GM12878 (cell line): ENCODE measurements at regions of chr1 and their contacts with region 1.

Region 1: GRCh38 chr1:56135069-56135863 is 444.1 kb downstream of the PLPP3 start:
- DNase-seq: no peak
- ATAC-seq: peak; percentile 67
- H3K4me3 ChIP-seq: no peak overlapping the region
- H3K27ac ChIP-seq: peak overlapping the region; percentile 56
- H3K4me1 ChIP-seq: peaks cover 25% of the 10 kb centered on the region
- H3K27me3 ChIP-seq: no peaks in the 10 kb centered on the region
- CTCF ChIP-seq: no peak
- EP300 ChIP-seq: peak in 1 of 2 experiments; percentile 87; a peak in 1 of 4 replicates
- POLR2A ChIP-seq: no peak
- RAD21 ChIP-seq: 0 out of 2 replicates have a peak, but pooled peaks have one; percentile 1

Region 2: DNA sequence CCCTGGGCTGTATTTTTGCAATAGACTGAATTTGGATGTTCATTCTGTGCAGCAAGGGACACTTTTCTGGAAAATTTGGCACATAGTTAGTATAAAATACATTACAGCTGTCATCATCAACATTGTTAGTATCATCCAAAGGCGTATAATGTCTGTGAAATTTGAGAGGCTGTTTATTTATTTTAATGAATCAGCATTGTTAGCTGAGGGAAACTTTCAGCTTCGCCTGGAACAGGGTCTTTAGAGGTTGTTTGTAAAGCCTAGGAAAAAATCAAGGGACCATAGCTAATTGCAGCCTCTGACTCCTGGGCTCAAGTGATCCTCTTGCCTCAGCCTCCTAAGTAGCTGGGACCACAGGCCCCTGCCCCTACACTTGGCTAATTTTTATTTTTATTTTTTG is 813.3 kb before region 1 on chr1:
- CTCF ChIA-PET with region 1: no interaction called
- POLR2A ChIA-PET with region 1: no interaction called
- RAD21 ChIA-PET with region 1: no interaction called
- SMC1A ChIA-PET with region 1: no interaction called
- in situ Hi-C with region 1: no loop called
- intact Hi-C with region 1: no loop called
- DNase-seq: no peak
- ATAC-seq: no peak
- H3K4me3 ChIP-seq: no peak overlapping the region
- H3K27ac ChIP-seq: no peak overlapping the region
- H3K4me1 ChIP-seq: no peaks in the 10 kb centered on the region
- H3K27me3 ChIP-seq: no peaks in the 10 kb centered on the region; a peak in 1 of 4 replicates
- CTCF ChIP-seq: no peak
- EP300 ChIP-seq: no peak
- POLR2A ChIP-seq: no peak
- RAD21 ChIP-seq: no peak

Region 3: GRCh38 chr1:55702064-55702463 is 433.2 kb before region 1 on chr1:
- CTCF ChIA-PET with region 1: no interaction called
- POLR2A ChIA-PET with region 1: no interaction called
- RAD21 ChIA-PET with region 1: no interaction called
- SMC1A ChIA-PET with region 1: no interaction called
- in situ Hi-C with region 1: no loop called
- intact Hi-C with region 1: no loop called
- DNase-seq: no peak
- ATAC-seq: peak; percentile 85
- H3K4me3 ChIP-seq: no peak overlapping the region
- H3K27ac ChIP-seq: no peak overlapping the region
- H3K4me1 ChIP-seq: no peaks in the 10 kb centered on the region
- H3K27me3 ChIP-seq: no peaks in the 10 kb centered on the region
- CTCF ChIP-seq: peak; percentile 64 to 90 (median 83)
- EP300 ChIP-seq: no peak
- POLR2A ChIP-seq: no peak
- RAD21 ChIP-seq: peak; percentile 57

Region 4: GRCh38 chr1:56068908-56069307 is 66.4 kb before region 1 on chr1:
- CTCF ChIA-PET with region 1: interaction called, 7 read pairs
- POLR2A ChIA-PET with region 1: interaction called, 3 read pairs
- RAD21 ChIA-PET with region 1: interaction called, 7 read pairs
- SMC1A ChIA-PET with region 1: interaction called, 13 read pairs
- in situ Hi-C with region 1: no loop called
- intact Hi-C with region 1: loop called (anchors 2 kb)
- DNase-seq: no peak
- ATAC-seq: peak; percentile 75
- H3K4me3 ChIP-seq: no peak overlapping the region
- H3K27ac ChIP-seq: no peak overlapping the region
- H3K4me1 ChIP-seq: no peaks in the 10 kb centered on the region
- H3K27me3 ChIP-seq: no peaks in the 10 kb centered on the region
- CTCF ChIP-seq: no peak
- EP300 ChIP-seq: no peak
- POLR2A ChIP-seq: no peak
- RAD21 ChIP-seq: no peak

Region 5: DNA sequence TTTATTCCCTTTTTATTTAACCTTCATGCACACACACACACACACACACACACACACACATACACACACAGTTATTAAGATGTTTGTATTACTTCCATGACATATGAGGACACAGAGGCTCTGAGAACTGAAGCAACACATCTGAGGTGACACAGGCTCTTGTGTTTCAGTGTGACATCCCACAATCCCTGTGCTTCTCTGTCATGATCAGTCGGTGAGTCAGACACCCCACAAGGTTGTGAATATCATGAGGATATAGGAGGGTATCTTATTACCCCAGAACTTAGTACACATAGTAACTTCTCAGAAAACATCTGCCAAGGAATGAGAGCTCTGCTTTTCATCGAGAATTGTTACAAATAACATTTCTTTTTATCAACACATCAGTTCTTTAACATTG is 15.2 kb before region 1 on chr1:
- CTCF ChIA-PET with region 1: interaction called, 4 read pairs
- POLR2A ChIA-PET with region 1: interaction called, 4 read pairs
- RAD21 ChIA-PET with region 1: interaction called, 10 read pairs
- SMC1A ChIA-PET with region 1: interaction called, 23 read pairs
- in situ Hi-C with region 1: no loop called
- intact Hi-C with region 1: no loop called
- DNase-seq: no peak
- ATAC-seq: no peak
- H3K4me3 ChIP-seq: no peak overlapping the region
- H3K27ac ChIP-seq: no peak overlapping the region
- H3K4me1 ChIP-seq: no peaks in the 10 kb centered on the region
- H3K27me3 ChIP-seq: no peaks in the 10 kb centered on the region
- CTCF ChIP-seq: no peak
- EP300 ChIP-seq: no peak
- POLR2A ChIP-seq: no peak
- RAD21 ChIP-seq: no peak

Region 6: GRCh38 chr1:56169856-56170255 is 34.6 kb after region 1 on chr1:
- CTCF ChIA-PET with region 1: interaction called, 5 read pairs
- POLR2A ChIA-PET with region 1: interaction called, 3 read pairs
- RAD21 ChIA-PET with region 1: interaction called, 16 read pairs
- SMC1A ChIA-PET with region 1: interaction called, 17 read pairs
- in situ Hi-C with region 1: no loop called
- intact Hi-C with region 1: no loop called
- DNase-seq: no peak
- ATAC-seq: no peak
- H3K4me3 ChIP-seq: no peak overlapping the region
- H3K27ac ChIP-seq: no peak overlapping the region
- H3K4me1 ChIP-seq: no peaks in the 10 kb centered on the region
- H3K27me3 ChIP-seq: no peaks in the 10 kb centered on the region
- CTCF ChIP-seq: no peak
- EP300 ChIP-seq: no peak
- POLR2A ChIP-seq: no peak
- RAD21 ChIP-seq: no peak

Region 7: DNA sequence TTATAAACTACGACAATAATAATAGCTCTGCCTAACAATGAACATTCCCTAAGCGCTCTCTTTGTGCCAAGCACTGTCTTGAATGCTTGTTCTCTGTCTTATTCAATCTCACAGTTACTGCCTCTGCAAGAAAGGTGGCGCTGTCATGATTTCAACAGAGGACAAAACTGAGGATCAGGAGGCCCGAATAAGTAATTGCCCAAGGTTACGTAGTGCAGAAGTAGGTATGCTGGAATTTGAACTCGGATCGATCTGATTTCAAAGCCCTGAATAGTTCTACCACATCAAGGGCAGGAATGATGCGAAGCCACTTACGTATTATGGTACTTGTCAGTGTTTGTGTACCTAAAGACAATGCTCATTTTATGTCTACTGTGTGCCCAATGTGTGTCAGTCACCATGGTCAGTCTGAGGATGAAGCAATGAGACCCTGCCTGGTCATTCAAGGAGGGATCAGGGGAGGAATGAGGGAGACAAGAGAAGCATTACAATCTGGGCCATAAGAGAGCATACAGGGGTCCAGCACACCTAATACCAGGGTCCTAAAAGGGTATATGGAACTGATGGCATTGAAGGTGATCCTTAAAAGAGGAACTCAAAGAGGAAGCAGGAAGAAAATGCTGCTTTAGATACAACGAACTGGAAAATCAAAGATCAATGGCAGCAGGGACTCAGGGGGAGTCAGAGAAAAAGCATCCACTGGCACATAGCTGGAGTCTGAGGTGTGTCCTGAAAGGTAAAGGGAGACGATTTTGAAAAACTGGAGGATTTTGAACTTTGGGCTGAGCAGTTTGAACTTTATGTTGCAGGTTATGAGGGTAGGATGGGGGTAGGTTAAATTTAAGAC is 54.9 kb after region 1 on chr1:
- CTCF ChIA-PET with region 1: interaction called, 5 read pairs
- POLR2A ChIA-PET with region 1: no interaction called
- RAD21 ChIA-PET with region 1: interaction called, 4 read pairs
- SMC1A ChIA-PET with region 1: interaction called, 27 read pairs
- in situ Hi-C with region 1: no loop called
- intact Hi-C with region 1: no loop called
- DNase-seq: no peak
- ATAC-seq: peak; percentile 73
- H3K4me3 ChIP-seq: no peak overlapping the region
- H3K27ac ChIP-seq: no peak overlapping the region
- H3K4me1 ChIP-seq: no peaks in the 10 kb centered on the region
- H3K27me3 ChIP-seq: no peaks in the 10 kb centered on the region
- CTCF ChIP-seq: peak in 2 of 3 experiments; percentile 27 to 35; a peak in 3 of 6 replicates
- EP300 ChIP-seq: no peak
- POLR2A ChIP-seq: no peak
- RAD21 ChIP-seq: peak; percentile 31; the same call in 1 of the 2 replicates

Region 8: DNA sequence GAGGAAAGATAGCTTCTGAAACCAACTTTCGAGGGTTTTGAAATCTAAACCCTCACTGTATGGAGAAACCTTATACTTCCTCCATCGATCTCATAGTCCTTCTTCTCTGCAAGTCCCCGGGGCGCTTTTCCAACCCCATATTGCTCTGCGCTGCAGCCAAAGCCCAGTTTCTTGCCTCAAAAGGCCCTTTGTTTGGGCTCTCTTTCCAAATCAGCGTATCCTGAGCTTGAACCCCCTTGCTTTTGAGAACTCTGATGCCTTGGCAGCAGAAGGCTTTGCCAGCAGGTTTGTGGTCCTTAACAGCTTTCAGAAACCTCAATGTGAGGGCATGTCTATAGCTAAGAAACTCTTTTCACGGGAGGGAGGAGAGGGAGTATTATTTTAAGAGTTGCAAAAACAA is 422.5 kb after region 1 on chr1:
- CTCF ChIA-PET with region 1: no interaction called
- POLR2A ChIA-PET with region 1: no interaction called
- RAD21 ChIA-PET with region 1: interaction called, 4 read pairs
- SMC1A ChIA-PET with region 1: interaction called, 10 read pairs
- in situ Hi-C with region 1: no loop called
- intact Hi-C with region 1: no loop called
- DNase-seq: no peak
- ATAC-seq: no peak
- H3K4me3 ChIP-seq: no peak overlapping the region
- H3K27ac ChIP-seq: no peak overlapping the region
- H3K4me1 ChIP-seq: no peaks in the 10 kb centered on the region
- H3K27me3 ChIP-seq: no peaks in the 10 kb centered on the region
- CTCF ChIP-seq: no peak
- EP300 ChIP-seq: no peak
- POLR2A ChIP-seq: no peak
- RAD21 ChIP-seq: no peak